ENCODE measurements at regions of chr7 and their contacts with region 1.

Region 1: DNA sequence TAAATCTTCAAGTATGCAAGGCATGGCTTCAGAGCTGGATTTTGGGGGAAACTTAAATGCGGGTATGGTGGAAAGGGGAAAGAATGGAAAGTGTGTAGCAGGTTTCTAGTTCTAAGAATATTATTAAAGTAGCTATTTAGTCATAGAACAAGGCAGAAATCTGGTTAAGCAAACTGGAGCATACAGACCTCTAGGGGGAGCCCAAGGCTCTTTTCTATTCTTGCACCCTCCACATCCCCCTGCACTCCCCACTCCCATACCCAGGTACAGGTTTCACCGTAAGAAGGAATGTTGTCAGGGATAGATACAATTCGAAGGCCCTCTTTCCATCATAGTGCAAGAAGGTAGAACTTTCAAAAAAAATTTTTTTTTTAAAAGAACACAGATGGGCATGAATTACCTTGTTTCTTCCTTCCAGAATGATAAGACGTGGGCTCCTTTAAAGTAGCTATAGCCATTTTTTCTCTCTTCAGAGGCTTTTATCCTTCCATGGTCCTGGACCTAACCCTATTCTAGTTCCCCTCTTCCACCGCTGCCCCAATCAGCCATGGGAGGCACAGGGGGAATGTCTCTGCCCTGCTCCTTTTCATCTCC is 41.5 kb upstream of the SMIM30 start:
- DNase-seq: no peak
- H3K4me3 ChIP-seq: no peak overlapping the region
- H3K27me3 ChIP-seq: no peaks in the 10 kb centered on the region
- CTCF ChIP-seq: peak; percentile 85

Region 2: GRCh38 chr7:113170370-113171222 is 10.8 kb after region 1 on chr7:
- CTCF ChIA-PET with region 1: interaction called, 21 read pairs
- POLR2A ChIA-PET with region 1: no interaction called
- DNase-seq: no peak
- H3K4me3 ChIP-seq: no peak overlapping the region
- H3K27me3 ChIP-seq: no peaks in the 10 kb centered on the region
- CTCF ChIP-seq: no peak

Region 3: DNA sequence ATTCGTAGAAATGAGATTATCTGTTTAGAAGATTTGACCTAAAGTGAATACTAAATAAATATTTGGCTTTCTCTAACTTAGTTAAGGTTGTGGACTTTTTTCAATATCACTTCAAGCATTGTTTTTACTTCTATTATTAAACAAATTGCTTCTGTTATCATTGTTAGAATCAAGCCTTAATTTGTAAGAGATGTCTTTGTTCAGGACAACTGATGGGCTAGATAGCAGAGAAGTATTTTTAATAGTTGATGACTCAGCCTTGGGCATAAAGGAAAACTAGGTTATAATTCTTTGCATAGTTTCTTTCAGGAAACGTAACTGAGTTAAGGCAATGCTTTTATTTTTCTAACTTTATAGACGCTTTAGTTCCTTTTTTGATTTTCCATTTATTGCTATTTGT is 87.4 kb after region 1 on chr7:
- CTCF ChIA-PET with region 1: interaction called, 11 read pairs
- POLR2A ChIA-PET with region 1: no interaction called
- DNase-seq: no peak
- H3K4me3 ChIP-seq: no peak overlapping the region
- H3K27me3 ChIP-seq: no peaks in the 10 kb centered on the region
- CTCF ChIP-seq: no peak

Region 4: DNA sequence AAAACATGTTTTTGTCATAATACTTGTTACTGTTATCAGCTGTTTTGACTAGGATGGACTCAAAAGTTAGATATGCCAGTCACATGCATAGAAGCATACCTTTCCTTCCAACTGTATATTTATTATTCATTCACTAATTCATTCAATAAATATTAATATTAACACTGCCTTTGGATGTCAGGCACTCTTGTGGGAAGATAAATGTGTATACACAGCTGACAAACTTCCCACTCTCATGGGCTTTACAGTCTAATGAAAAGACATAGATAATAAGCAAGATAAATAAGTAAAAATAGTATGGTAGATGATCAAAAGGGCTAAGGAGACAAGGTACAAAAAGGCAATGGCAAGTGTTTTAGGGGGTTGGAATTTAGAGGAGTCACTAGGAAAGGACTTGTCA is 138.7 kb after region 1 on chr7:
- CTCF ChIA-PET with region 1: interaction called, 13 read pairs
- POLR2A ChIA-PET with region 1: no interaction called
- DNase-seq: no peak
- H3K4me3 ChIP-seq: no peak overlapping the region
- H3K27me3 ChIP-seq: no peaks in the 10 kb centered on the region
- CTCF ChIP-seq: no peak